ENCODE measurements at regions of chr17 and their contacts with region 1.

Region 1: DNA sequence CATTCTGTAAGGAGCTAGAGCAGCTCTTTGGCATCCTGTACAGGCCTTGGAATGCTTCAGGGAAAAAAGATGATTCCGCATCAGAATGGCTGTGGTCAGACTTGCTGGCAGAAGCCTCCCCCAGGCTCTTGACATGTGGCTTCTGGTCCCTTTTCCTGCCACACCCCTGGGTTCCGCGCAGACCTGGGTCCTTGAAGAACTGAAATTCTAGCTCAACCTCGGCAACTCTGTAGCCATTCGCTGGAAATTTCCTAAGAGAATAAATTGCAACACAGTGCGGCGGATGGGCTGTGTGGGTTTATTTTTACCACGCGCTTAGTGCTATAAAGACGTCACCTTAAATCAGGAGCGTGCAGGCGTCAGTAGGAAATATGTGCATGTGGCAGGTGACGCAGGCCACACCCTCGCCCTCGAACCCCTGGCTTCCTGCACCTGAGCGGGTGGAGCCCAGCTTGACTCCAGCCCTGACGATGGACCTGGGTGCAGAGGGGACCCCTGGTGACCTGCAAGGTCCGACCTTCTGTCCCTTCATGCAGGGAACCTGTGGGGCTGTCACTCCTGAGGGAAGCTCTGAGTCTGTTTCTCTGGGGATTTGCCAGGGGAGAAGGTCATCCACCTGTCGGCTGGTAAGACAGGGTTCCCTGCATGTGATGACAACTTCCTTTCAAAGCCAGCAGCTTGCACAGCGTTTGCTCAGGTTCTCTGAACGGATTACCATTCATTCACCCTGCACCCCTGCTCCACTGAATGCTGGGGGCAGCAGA is 46.3 kb downstream of the METRNL start:
- DNase-seq: peak; percentile 58 to 77 (median 76)
- H3K4me3 ChIP-seq: peak overlapping the region in 1 of 7 experiments; percentile 1
- H3K27ac ChIP-seq: no peak overlapping the region
- H3K4me1 ChIP-seq: peaks cover 3 to 32% (median 26%) of the 10 kb centered on the region in 4 experiments
- H3K27me3 ChIP-seq: no peaks in the 10 kb centered on the region

Region 2: DNA sequence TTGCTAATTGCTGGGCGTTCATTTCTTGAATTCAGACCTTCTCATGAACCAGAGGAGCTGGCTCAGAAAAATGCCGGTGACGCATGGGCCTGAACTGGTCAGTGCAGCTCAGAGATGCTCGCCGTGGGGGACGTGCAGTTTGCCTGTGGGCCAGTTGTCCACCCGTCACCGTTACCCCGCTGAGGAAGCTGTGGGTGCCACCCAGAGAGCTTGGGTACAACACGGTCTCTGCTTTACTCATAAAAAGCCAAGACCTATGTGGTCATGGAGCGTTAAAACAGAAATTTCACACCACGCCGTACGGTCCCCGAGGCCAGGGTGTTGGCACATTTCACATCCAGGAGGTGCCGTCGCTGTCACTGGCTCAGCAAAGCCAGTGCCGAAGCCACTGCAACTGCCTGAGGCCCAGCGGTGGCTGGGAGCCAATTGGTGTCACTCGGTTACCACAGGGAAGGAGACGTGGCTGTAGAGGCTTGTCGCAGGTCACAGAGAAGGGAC is 74.6 kb after region 1 on chr17:
- CTCF ChIA-PET with region 1: interaction called, 19 read pairs
- POLR2A ChIA-PET with region 1: interaction called, 34 read pairs
- DNase-seq: peak; percentile 67 to 93 (median 93)
- H3K4me3 ChIP-seq: peak overlapping the region in 4 of 7 experiments; percentile 16 to 61 (median 55)
- H3K27ac ChIP-seq: peak overlapping the region; percentile 84 to 86
- H3K4me1 ChIP-seq: peaks cover 6 to 73% (median 69%) of the 10 kb centered on the region in 4 experiments
- H3K27me3 ChIP-seq: no peaks in the 10 kb centered on the region